Breast epithelium (tissue), 4 donors: ENCODE measurements at regions of chr6 and their contacts with region 1.

Region 1: DNA sequence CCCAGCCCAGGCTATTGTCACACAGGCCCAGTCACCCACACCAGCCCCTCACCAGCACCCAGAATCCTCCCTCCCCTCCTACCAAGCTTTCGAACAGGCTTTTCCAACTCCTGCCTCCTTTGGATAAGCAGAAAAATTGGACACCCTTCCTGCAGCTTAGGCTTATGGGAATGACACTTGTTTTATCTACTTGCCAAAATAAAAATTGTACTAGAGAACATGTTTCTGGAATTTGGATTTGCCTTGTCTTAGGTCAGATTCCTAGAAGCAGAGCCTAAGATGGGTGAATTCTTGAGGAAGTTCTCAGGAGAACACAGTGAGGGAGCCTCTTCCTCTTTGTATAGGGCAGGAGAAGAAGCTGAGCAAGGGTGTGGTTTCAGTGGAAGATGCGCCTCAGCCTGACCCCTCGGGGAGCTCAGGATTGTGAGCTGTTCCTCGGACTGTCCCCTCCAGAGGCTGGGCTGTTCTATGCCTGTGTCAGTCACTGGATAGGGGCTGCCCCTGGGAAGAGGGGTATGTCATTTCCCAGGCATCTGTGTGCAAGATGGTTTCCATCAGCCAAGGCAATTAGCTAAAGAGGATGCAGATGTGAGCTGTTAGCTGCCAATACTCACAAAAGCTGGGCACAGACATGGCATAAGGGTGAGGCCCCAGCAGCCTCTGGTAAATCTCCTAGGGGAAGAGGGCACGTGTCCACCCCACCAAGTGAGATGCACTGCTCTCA is 33.9 kb downstream of the ITPR3 start:
- DNase-seq: no peak
- H3K4me3 ChIP-seq: no peak overlapping the region
- H3K27ac ChIP-seq: no peak overlapping the region
- H3K4me1 ChIP-seq: no peaks in the 10 kb centered on the region
- H3K27me3 ChIP-seq: no peaks in the 10 kb centered on the region
- CTCF ChIP-seq: no peak
- POLR2A ChIP-seq: no peak

Region 2: GRCh38 chr6:35096129-35096862 is 1441.3 kb after region 1 on chr6:
- intact Hi-C with region 1: loop called (anchors 5 kb)
- DNase-seq: no peak
- H3K4me3 ChIP-seq: no peak overlapping the region
- H3K27ac ChIP-seq: peak overlapping the region in 1 of 2 donors; percentile 26
- H3K4me1 ChIP-seq: no peaks in the 10 kb centered on the region
- H3K27me3 ChIP-seq: no peaks in the 10 kb centered on the region
- CTCF ChIP-seq: no peak
- POLR2A ChIP-seq: no peak